Activated T-helper 1 cell treated with anti-CD3 and anti-CD28 coated beads, Interleukin-12 subunit alpha, Interleukin-12 subunit beta, Interleukin-2, Interleukin-4 antibody, amounts not matched to agents 30 ng/mL and 10 ng/mL and 1 ng/mL, durations not matched to agents 14 hours and 24 hours and 36 hours (primary cell): ENCODE measurements at regions of chr18 and their contacts with region 1.

Region 1: DNA sequence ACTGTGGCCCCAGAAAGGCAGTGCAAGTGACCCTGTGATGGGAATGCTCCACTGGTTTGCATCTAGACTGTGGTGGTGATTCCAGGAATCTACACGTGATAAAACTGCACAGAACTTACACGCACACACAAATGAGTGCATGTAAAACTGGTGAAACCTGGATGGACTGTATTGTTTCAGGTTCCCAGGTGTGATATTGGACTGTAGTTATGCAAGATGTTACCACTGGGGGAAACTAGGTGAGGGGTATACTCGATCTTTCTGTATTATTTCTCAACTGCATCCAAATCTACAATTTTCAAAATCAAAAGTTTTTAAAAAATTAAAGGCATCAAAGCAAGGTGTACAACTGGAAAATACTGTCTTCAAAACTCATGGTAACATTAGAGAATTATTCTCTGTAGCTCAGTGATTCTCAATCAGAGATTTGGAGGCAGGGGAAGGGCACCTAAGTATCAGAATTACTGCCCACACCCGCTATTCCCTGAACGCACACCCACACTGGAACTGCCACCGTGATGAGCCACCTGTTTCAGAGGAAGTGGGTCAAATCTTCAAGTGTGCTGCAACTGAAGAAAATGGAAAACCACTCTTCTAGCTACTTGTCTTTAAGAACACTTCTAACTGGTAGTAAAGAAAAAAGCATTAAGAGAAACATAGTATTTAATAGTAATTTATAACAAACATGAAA is 26.7 kb downstream of the PTPN2 start:
- DNase-seq: no peak
- H3K4me3 Mint-ChIP-seq: peak overlapping the region; percentile 53
- H3K27ac Mint-ChIP-seq: peak overlapping the region; percentile 77
- H3K4me1 Mint-ChIP-seq: peaks cover 83% of the 10 kb centered on the region
- H3K27me3 Mint-ChIP-seq: no peaks in the 10 kb centered on the region

Region 2: DNA sequence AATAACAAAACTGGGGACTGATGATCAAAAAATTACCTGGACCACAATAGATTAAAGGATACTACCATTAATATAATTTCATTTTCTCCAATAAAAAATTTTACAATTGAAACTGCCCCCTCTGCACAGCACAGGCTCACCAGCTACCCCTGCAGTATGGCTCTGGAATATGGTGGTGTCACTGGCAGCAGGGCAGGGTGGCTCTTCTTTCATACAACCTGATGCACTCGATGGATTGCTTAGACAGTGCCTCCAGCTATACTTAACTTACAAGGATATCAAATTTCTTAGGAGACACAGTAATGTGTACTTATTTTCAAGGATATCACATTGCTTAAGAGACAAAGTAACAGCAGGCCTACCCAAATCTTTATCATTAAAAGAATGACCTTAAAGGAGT is 325.6 kb before region 1 on chr18:
- intact Hi-C with region 1: no loop called
- DNase-seq: no peak
- H3K4me3 Mint-ChIP-seq: no peak overlapping the region
- H3K27ac Mint-ChIP-seq: no peak overlapping the region
- H3K4me1 Mint-ChIP-seq: no peaks in the 10 kb centered on the region
- H3K27me3 Mint-ChIP-seq: peaks cover 5% of the 10 kb centered on the region

Region 3: GRCh38 chr18:12639990-12640880 is 217.1 kb before region 1 on chr18:
- intact Hi-C with region 1: no loop called
- DNase-seq: no peak
- H3K4me3 Mint-ChIP-seq: no peak overlapping the region
- H3K27ac Mint-ChIP-seq: no peak overlapping the region
- H3K4me1 Mint-ChIP-seq: peaks cover 6% of the 10 kb centered on the region
- H3K27me3 Mint-ChIP-seq: peaks cover 23% of the 10 kb centered on the region

Region 4: DNA sequence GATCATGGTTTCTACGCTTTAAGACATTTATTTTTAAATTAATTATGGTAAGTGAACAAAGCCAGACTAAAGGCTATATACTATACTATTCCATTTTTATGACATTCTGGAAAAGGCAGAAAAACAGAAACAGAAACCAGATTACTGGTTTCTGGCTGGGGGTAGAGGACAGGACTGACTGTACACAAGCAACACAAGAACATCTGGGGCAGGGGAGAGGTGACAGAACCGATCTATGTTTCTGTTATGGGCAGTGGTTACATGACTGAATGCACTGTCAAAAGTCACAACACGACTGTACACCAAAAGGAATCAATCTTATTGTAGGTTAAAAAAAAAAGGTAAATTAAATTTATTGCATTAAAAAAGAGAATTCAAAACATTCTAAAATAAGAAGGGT is 38.0 kb before region 1 on chr18:
- intact Hi-C with region 1: loop called (anchors 5 kb)
- DNase-seq: peak; percentile 38
- H3K4me3 Mint-ChIP-seq: peak overlapping the region; percentile 35
- H3K27ac Mint-ChIP-seq: peak overlapping the region; percentile 35
- H3K4me1 Mint-ChIP-seq: peaks cover 62% of the 10 kb centered on the region
- H3K27me3 Mint-ChIP-seq: no peaks in the 10 kb centered on the region